ENCODE measurements at regions of chr2 and their contacts with region 1.

Region 1: DNA sequence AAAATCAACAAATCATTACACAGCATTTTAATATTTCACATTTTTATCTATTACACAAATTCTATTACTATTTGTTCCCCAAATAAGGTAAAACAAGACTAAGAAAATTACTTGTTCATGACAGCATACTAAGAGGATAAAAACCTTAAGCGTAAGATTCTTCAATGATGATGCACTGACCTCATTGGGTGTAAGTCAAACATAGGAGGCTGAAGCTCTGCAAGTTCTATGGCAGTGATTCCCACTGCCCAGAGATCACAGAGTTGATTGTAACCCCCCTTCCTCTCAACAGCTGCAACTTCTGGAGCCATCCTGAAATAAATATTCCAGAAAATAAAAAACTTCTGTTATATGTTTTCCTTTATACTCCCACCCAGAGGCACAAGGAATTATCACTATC is 82.2 kb upstream of the CDKL4 start:
- DNase-seq: no peak
- ATAC-seq: no peak
- H3K4me3 ChIP-seq: no peak overlapping the region
- H3K4me3 Mint-ChIP-seq: no peak overlapping the region
- H3K27ac ChIP-seq: no peak overlapping the region
- H3K27ac Mint-ChIP-seq: no peak overlapping the region
- H3K4me1 ChIP-seq: no peaks in the 10 kb centered on the region
- H3K4me1 Mint-ChIP-seq: no peaks in the 10 kb centered on the region
- H3K27me3 ChIP-seq: no peaks in the 10 kb centered on the region
- H3K27me3 Mint-ChIP-seq: no peaks in the 10 kb centered on the region

Region 2: DNA sequence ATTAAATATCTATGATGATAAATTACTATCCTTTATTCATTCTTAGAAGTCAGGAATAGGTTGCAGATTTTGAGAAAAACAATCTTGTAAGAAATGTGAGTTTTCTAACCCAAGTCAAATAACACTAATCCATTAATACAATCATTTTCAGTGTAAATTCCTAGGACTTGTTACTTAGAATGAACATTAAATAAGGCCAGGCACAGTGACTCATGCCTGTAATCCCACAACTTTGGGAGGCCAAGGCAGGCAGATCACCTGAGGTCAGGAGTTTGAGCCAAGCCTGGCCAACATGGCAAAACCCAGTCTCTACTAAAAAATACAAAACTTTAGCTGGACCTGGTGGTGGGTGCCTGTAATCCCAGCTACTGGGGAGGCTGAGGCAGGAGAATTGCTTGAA is 36.4 kb before region 1 on chr2:
- CTCF ChIA-PET with region 1: no interaction called
- POLR2A ChIA-PET with region 1: no interaction called
- DNase-seq: no peak
- ATAC-seq: no peak
- H3K4me3 ChIP-seq: no peak overlapping the region
- H3K4me3 Mint-ChIP-seq: no peak overlapping the region
- H3K27ac ChIP-seq: no peak overlapping the region
- H3K27ac Mint-ChIP-seq: no peak overlapping the region
- H3K4me1 ChIP-seq: no peaks in the 10 kb centered on the region
- H3K4me1 Mint-ChIP-seq: no peaks in the 10 kb centered on the region
- H3K27me3 ChIP-seq: no peaks in the 10 kb centered on the region
- H3K27me3 Mint-ChIP-seq: no peaks in the 10 kb centered on the region

Region 3: DNA sequence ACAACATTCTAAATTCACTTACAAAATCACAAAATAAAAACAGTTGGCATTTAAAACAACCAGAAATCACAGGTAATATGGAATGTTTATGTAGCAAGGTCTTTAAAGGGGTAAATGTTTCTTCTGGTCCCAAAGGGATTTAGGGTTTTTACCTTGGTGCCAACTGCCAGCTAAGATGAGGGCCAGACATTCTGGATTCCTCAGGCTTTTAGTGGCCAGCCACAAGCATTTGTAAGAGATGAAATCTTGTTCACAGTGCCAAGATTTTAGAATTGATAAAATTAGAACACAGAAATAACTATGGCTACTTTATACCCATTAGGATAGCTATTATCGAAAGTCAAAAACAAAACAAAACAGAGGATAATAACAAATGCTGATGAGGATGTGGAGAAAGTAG is 21.8 kb before region 1 on chr2:
- CTCF ChIA-PET with region 1: no interaction called
- POLR2A ChIA-PET with region 1: no interaction called
- DNase-seq: no peak
- ATAC-seq: no peak
- H3K4me3 ChIP-seq: no peak overlapping the region
- H3K4me3 Mint-ChIP-seq: no peak overlapping the region
- H3K27ac ChIP-seq: no peak overlapping the region
- H3K27ac Mint-ChIP-seq: no peak overlapping the region
- H3K4me1 ChIP-seq: no peaks in the 10 kb centered on the region
- H3K4me1 Mint-ChIP-seq: no peaks in the 10 kb centered on the region
- H3K27me3 ChIP-seq: no peaks in the 10 kb centered on the region
- H3K27me3 Mint-ChIP-seq: no peaks in the 10 kb centered on the region

Region 4: GRCh38 chr2:39356922-39357639 is 31.1 kb after region 1 on chr2:
- CTCF ChIA-PET with region 1: interaction called in 1 of 2 experiments, 11 read pairs
- POLR2A ChIA-PET with region 1: no interaction called
- DNase-seq: no peak
- ATAC-seq: no peak
- H3K4me3 ChIP-seq: no peak overlapping the region
- H3K4me3 Mint-ChIP-seq: no peak overlapping the region
- H3K27ac ChIP-seq: no peak overlapping the region
- H3K27ac Mint-ChIP-seq: no peak overlapping the region
- H3K4me1 ChIP-seq: no peaks in the 10 kb centered on the region
- H3K4me1 Mint-ChIP-seq: no peaks in the 10 kb centered on the region
- H3K27me3 ChIP-seq: no peaks in the 10 kb centered on the region
- H3K27me3 Mint-ChIP-seq: no peaks in the 10 kb centered on the region